Endothelial cell of umbilical vein (primary cell): ENCODE measurements at regions of chr2 and their contacts with region 1.

Region 1: GRCh38 chr2:45255563-45255962 is 246.3 kb upstream of the SIX2 start:
- DNase-seq: peak; percentile 44
- H3K4me3 ChIP-seq: no peak overlapping the region
- H3K27ac ChIP-seq: peak overlapping the region; percentile 42
- H3K4me1 ChIP-seq: peaks cover 42% of the 10 kb centered on the region
- H3K27me3 ChIP-seq: no peaks in the 10 kb centered on the region
- CTCF ChIP-seq: no peak
- POLR2A ChIP-seq: no peak

Region 2: GRCh38 chr2:45000921-45001868 is 254.4 kb before region 1 on chr2:
- CTCF ChIA-PET with region 1: no interaction called
- POLR2A ChIA-PET with region 1: no interaction called
- dilution Hi-C with region 1: no loop called
- intact Hi-C with region 1: no loop called
- DNase-seq: peak; percentile 14
- H3K4me3 ChIP-seq: peak overlapping the region in 2 of 3 experiments; percentile 19 to 34
- H3K27ac ChIP-seq: no peak overlapping the region
- H3K4me1 ChIP-seq: peaks cover 14% of the 10 kb centered on the region
- H3K27me3 ChIP-seq: peaks cover 84 to 96% of the 10 kb centered on the region in 2 experiments
- CTCF ChIP-seq: no peak
- POLR2A ChIP-seq: no peak

Region 3: DNA sequence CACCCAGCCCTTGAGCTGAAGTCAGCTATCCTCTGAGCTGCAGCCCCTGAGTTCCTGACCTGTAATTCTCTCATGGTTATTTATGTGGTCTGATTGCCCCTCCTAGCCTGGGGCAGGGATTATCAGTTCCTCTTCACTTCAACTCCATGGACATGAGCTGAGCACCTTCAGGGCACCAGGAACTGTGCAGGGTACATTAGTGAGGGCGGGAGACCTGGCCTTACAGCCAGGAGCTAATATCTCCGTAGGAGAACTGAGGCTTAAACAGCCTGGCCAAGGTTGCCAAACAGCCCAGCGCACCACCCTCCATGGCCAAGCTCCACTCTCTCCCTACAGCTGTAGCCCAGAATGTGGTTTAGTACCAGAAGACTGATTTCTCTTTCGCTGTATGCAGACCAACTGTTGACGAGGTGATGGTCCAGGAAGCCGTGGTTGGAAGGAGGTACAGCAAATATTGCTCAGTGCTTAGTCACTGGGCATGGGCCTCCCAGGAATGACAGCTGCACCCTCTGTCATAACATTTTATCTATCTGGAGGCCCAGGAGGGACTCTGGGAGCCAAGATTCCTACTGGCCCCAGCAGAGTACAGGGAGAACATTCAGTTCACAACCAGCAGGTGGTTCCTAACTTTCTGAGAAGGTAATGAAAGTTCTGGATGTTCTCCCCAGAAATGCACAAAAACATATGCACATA is 17.6 kb before region 1 on chr2:
- CTCF ChIA-PET with region 1: interaction called, 11 read pairs
- POLR2A ChIA-PET with region 1: no interaction called
- dilution Hi-C with region 1: no loop called
- intact Hi-C with region 1: no loop called
- DNase-seq: peak; percentile 62
- H3K4me3 ChIP-seq: no peak overlapping the region
- H3K27ac ChIP-seq: peak overlapping the region; percentile 7
- H3K4me1 ChIP-seq: peaks cover 34% of the 10 kb centered on the region
- H3K27me3 ChIP-seq: no peaks in the 10 kb centered on the region
- CTCF ChIP-seq: peak in 1 of 2 donors; percentile 16
- POLR2A ChIP-seq: no peak